Activated CD4-positive, alpha-beta T cell treated with anti-CD3 and anti-CD28 coated beads for 36 hours (primary cell): ENCODE measurements at regions of chrX and their contacts with region 1.

Region 1: GRCh38 chrX:8815464-8816065 is 14.4 kb upstream of the FAM9A start:
- DNase-seq: peak; percentile 3
- ATAC-seq: no peak
- H3K4me3 Mint-ChIP-seq: no peak overlapping the region
- H3K27ac Mint-ChIP-seq: no peak overlapping the region
- H3K4me1 Mint-ChIP-seq: no peaks in the 10 kb centered on the region
- H3K27me3 Mint-ChIP-seq: no peaks in the 10 kb centered on the region

Region 2: GRCh38 chrX:8743126-8743732 is 72.3 kb before region 1 on chrX:
- CTCF ChIA-PET with region 1: interaction called, 3 read pairs
- POLR2A ChIA-PET with region 1: no interaction called
- intact Hi-C with region 1: loop called (anchors 2 kb)
- DNase-seq: peak; percentile 69
- ATAC-seq: no peak
- H3K4me3 Mint-ChIP-seq: no peak overlapping the region
- H3K27ac Mint-ChIP-seq: no peak overlapping the region
- H3K4me1 Mint-ChIP-seq: no peaks in the 10 kb centered on the region
- H3K27me3 Mint-ChIP-seq: peaks cover 3% of the 10 kb centered on the region

Region 3: GRCh38 chrX:8748855-8749254 is 66.7 kb before region 1 on chrX:
- CTCF ChIA-PET with region 1: interaction called, 4 read pairs
- POLR2A ChIA-PET with region 1: no interaction called
- intact Hi-C with region 1: loop called in 1 of 2 experiments (anchors 2 kb)
- DNase-seq: no peak
- ATAC-seq: no peak
- H3K4me3 Mint-ChIP-seq: no peak overlapping the region
- H3K27ac Mint-ChIP-seq: no peak overlapping the region
- H3K4me1 Mint-ChIP-seq: no peaks in the 10 kb centered on the region
- H3K27me3 Mint-ChIP-seq: peaks cover 4% of the 10 kb centered on the region

Region 4: DNA sequence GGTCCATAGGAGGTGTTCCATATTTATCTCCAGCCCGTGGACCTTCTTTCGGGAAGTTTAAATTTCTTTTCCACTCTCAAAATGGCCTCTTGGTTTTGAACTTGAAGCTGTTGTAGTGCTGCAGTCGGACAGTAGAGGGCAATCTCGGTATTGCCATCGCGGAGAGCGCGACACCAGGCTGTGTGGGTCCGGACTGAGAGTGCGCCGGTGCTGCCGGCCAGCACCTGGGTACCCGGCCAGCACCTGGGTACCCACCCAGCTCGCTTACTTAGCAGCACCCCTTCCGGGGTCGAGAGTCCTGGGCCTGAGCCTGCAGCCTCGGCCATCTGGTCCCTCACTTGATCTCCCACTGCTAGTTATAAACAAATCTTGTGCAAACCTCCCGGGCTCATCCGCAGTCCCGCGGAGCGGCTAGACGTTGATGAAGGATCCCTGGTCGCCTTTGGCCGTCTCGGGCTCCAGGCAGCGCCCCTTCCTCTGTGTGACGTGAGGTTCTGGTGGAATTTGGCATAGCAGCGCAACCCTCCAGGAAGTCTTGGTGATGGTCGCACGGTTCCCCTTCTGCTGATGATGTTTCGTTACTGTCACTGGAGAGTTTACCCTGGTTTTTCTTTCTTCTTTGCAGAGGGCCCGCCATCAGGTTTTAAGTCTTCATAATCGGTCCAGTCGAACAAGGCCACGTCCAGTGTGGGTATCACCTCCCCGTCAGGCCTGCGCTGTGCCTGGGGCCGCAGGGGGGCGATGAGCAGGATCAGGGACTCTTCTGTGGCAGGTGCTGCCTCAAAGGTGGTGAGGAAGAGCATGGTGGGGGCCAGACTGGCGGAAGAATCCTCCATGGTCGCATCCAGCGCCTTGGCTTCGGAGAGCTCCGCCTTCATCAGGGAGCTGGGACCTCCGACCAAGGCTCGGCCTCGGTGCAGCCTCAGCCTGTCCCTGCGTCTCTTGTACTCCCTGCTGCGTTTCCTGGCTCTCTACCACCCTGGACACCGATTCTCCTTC is 32.2 kb before region 1 on chrX:
- CTCF ChIA-PET with region 1: no interaction called
- POLR2A ChIA-PET with region 1: no interaction called
- intact Hi-C with region 1: loop called in 1 of 2 experiments (anchors 5 kb)
- DNase-seq: peak; percentile 60
- ATAC-seq: peak; percentile 58
- H3K4me3 Mint-ChIP-seq: peak overlapping the region; percentile 33
- H3K27ac Mint-ChIP-seq: no peak overlapping the region
- H3K4me1 Mint-ChIP-seq: peaks cover 2% of the 10 kb centered on the region
- H3K27me3 Mint-ChIP-seq: no peaks in the 10 kb centered on the region

Region 5: GRCh38 chrX:9708904-9709553 is 893.5 kb after region 1 on chrX:
- CTCF ChIA-PET with region 1: interaction called, 3 read pairs
- POLR2A ChIA-PET with region 1: no interaction called
- intact Hi-C with region 1: loop called (anchors 2 kb)
- DNase-seq: peak; percentile 84
- ATAC-seq: peak; percentile 78
- H3K4me3 Mint-ChIP-seq: no peak overlapping the region
- H3K27ac Mint-ChIP-seq: no peak overlapping the region
- H3K4me1 Mint-ChIP-seq: peaks cover 6% of the 10 kb centered on the region
- H3K27me3 Mint-ChIP-seq: no peaks in the 10 kb centered on the region